Posterior vena cava (tissue), 2 donors: ENCODE measurements at regions of chr15 and their contacts with region 1.

Region 1: DNA sequence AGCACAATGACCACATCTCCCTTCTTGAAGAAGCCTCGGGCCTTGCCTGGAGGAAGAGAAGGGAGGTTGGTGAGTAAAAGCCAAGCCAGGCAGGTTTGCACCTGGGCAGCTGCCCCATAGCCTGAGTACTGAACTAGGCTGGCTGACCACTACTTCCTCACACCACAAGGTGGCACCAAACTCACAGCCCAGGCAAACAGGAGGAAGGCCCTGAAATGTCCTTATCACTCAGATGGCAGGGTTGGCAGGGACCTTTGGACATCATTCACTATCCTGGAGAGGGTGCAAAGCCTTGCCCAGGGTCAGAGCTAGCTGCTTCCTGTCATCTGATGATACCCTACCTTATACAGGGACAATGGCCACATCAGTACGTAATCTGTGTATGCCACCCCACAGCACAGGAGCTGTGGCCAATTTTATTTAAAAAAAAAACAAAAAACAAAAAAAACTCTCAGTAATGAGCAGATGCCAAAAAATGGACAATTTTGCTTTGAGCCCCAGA is 2.2 kb upstream of the GRAMD2A start:
- DNase-seq: peak; percentile 89

Region 2: DNA sequence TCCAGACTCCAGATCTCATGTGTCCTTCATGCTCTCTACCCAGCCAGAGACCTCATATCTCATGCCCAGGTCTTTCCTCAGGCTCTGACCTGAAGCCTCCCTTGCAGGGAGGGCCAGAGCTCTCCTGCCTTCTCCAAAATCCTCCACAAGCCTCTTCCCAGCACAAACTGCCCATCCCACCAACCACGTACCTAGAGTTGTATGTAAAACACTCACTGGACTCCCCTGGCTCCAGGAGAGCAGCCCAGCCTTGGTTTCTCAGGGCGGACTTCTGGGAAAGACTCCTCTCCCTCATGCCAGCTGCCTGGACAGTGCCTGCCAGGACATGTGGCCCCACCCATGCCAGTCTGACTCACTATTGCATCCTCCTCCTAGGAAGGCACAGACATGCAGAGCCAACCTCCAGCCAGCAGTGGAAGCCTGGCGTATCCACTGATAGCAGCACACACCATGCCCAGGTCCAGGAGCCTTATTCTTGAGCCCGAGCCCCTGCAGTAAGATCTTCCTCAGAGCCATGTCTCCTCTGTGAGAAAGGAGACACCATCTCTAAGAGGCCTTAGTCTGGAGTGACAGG is 22.6 kb after region 1 on chr15:
- intact Hi-C with region 1: loop called in 1 of 2 experiments (anchors 2 kb)
- DNase-seq: no peak

Region 3: GRCh38 chr15:72265031-72265430 is 65.3 kb after region 1 on chr15:
- intact Hi-C with region 1: loop called in 1 of 2 experiments (anchors 10 kb)
- DNase-seq: no peak

Region 4: DNA sequence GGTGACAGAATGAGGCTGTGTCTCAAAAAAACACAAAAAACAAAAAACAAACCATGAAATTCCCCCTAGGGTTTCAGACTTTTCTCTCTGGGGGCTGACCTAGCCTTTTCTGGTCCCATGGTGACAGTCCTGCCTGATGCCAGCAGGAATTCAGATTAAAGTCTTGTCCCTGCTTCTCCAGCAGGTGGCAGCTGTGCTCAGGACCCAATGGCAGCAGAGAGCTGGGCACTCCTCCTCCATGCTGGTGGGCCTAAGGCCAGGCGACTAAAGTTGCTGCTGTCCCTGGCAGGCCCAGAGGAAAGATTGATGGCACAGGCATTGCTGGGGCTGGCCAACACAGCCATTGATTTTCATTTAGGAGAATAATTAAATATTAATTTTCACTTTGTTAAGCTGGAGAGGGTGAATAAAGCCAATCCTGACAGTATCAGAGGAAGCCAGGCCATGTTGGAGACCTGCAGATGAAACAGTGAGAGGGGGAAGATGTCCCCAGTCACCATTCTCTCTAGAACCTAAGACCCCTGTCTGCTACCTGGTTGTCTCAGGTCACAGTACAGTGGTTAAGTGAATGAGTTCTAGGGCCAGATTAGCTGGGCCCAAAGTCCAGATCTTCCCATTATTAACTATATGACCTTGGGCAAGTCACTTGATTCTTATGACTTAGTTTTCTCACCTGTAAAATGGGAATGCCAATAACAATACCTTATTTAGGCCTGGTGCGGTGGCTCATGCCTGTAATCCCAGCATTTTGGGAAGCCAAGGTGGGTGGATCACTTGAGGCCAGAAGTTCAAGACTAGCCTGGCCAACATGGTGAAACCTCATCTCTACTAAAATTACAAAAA is 113.1 kb after region 1 on chr15:
- intact Hi-C with region 1: no loop called
- DNase-seq: peak; percentile 90